ENCODE measurements at regions of chr18 and their contacts with region 1.

Region 1: GRCh38 chr18:49628881-49629795 is 67.3 kb downstream of the LIPG start:
- DNase-seq: no peak
- H3K4me3 ChIP-seq: no peak overlapping the region
- H3K27ac ChIP-seq: no peak overlapping the region
- H3K4me1 ChIP-seq: peaks cover 5% of the 10 kb centered on the region
- H3K27me3 ChIP-seq: no peaks in the 10 kb centered on the region
- CTCF ChIP-seq: peak in 1 of 2 donors; percentile 31

Region 2: GRCh38 chr18:49527631-49528327 is 101.4 kb before region 1 on chr18:
- CTCF ChIA-PET with region 1: no interaction called
- dilution Hi-C with region 1: loop called (anchors 5 kb)
- in situ Hi-C with region 1: no loop called
- intact Hi-C with region 1: no loop called
- DNase-seq: no peak
- H3K4me3 ChIP-seq: no peak overlapping the region
- H3K27ac ChIP-seq: no peak overlapping the region
- H3K4me1 ChIP-seq: no peaks in the 10 kb centered on the region
- H3K27me3 ChIP-seq: no peaks in the 10 kb centered on the region
- CTCF ChIP-seq: no peak

Region 3: GRCh38 chr18:49645841-49646351 is 16.8 kb after region 1 on chr18:
- CTCF ChIA-PET with region 1: no interaction called
- dilution Hi-C with region 1: no loop called
- in situ Hi-C with region 1: no loop called
- intact Hi-C with region 1: loop called (anchors 2 kb)
- DNase-seq: peak; percentile 42
- H3K4me3 ChIP-seq: peak overlapping the region in 2 of 3 experiments; percentile 1 to 32
- H3K27ac ChIP-seq: no peak overlapping the region
- H3K4me1 ChIP-seq: peaks cover 5% of the 10 kb centered on the region
- H3K27me3 ChIP-seq: no peaks in the 10 kb centered on the region
- CTCF ChIP-seq: no peak

Region 4: GRCh38 chr18:49672853-49673252 is 43.7 kb after region 1 on chr18:
- CTCF ChIA-PET with region 1: no interaction called
- dilution Hi-C with region 1: loop called (anchors 5 kb)
- in situ Hi-C with region 1: no loop called
- intact Hi-C with region 1: no loop called
- DNase-seq: no peak
- H3K4me3 ChIP-seq: no peak overlapping the region
- H3K27ac ChIP-seq: no peak overlapping the region
- H3K4me1 ChIP-seq: no peaks in the 10 kb centered on the region
- H3K27me3 ChIP-seq: peaks cover 5% of the 10 kb centered on the region
- CTCF ChIP-seq: no peak

Measured in mammary epithelial cell (primary cell).